Activated naive CD4-positive, alpha-beta T cell treated with anti-CD3 and anti-CD28 coated beads, Interleukin-2, amount 10 ng/mL, durations not matched to agents 7 days and 5 days (primary cell): ENCODE measurements at regions of chr7 and their contacts with region 1.

Region 1: GRCh38 chr7:4775250-4775847 is at the start of gene AP5Z1:
- DNase-seq: peak; percentile 97
- H3K4me3 Mint-ChIP-seq: peak within 1 kb of the TSS; percentile 100
- H3K27ac Mint-ChIP-seq: peak within 1 kb of the TSS; percentile 99
- H3K4me1 Mint-ChIP-seq: peaks cover 43% of the 10 kb centered on the region
- H3K27me3 Mint-ChIP-seq: no peaks in the 10 kb centered on the region

Region 2: GRCh38 chr7:4791738-4792536 is 16.6 kb after region 1 on chr7:
- CTCF ChIA-PET with region 1: interaction called, 13 read pairs
- DNase-seq: peak; percentile 76
- H3K4me3 Mint-ChIP-seq: no peak overlapping the region
- H3K27ac Mint-ChIP-seq: peak overlapping the region; percentile 65
- H3K4me1 Mint-ChIP-seq: peaks cover 10% of the 10 kb centered on the region
- H3K27me3 Mint-ChIP-seq: no peaks in the 10 kb centered on the region